AG04449 (cell line): ENCODE measurements at regions of chr12 and their contacts with region 1.

Region 1: DNA sequence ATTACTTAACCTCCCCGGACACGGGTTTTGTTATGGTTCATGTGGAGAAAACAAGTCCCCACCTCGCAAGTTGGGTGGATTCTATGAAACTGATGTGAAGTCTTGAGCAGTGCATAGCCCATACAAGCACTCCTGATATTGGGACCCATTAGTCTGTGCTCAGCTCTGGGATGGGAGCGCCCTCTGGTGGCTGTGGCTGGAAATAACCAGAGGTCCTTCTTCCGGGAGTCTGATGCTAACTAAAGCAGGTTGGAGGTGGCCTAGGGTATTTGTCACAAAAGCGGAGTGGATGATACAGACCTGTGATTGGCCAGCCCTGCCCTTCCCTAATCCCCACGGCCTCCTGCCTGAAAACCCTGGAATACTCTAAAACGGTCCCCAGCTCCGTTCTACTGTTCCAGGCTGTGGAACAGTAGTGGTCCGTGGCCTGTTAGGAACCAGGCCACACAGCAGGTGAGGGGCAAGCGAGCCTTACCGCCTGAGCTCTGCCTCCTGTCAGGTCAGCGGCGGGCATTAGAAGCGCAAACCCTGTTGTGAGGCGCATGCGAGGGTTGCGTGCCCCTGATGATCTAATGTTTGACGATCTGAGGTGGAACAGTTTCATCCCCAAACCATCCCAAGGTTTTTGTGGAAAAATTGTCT is 6.4 kb downstream of the SLC48A1 start:
- DNase-seq: peak; percentile 34
- H3K4me3 ChIP-seq: no peak overlapping the region
- CTCF ChIP-seq: peak; percentile 86

Region 2: DNA sequence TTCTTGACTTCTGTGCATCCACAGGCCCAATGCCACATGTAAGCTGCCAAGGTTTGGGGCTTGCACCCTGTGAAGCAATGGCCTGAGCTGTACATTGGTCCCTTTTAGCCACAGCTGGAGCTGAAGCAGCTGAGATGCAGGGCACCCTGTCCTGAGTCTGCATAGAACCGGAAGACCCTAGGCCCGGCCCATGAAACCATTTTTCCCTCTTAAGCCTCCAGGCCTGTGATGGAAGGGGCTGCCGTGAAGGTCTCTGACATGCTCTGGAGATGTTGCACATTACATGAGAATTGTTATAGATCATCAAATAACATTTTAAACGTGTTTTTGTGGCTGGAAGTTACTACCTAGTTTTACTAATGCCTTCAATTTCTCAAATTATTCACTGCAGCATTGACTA is 262.3 kb before region 1 on chr12:
- CTCF ChIA-PET with region 1: no interaction called
- POLR2A ChIA-PET with region 1: no interaction called
- DNase-seq: no peak
- H3K4me3 ChIP-seq: no peak overlapping the region
- CTCF ChIP-seq: no peak

Region 3: DNA sequence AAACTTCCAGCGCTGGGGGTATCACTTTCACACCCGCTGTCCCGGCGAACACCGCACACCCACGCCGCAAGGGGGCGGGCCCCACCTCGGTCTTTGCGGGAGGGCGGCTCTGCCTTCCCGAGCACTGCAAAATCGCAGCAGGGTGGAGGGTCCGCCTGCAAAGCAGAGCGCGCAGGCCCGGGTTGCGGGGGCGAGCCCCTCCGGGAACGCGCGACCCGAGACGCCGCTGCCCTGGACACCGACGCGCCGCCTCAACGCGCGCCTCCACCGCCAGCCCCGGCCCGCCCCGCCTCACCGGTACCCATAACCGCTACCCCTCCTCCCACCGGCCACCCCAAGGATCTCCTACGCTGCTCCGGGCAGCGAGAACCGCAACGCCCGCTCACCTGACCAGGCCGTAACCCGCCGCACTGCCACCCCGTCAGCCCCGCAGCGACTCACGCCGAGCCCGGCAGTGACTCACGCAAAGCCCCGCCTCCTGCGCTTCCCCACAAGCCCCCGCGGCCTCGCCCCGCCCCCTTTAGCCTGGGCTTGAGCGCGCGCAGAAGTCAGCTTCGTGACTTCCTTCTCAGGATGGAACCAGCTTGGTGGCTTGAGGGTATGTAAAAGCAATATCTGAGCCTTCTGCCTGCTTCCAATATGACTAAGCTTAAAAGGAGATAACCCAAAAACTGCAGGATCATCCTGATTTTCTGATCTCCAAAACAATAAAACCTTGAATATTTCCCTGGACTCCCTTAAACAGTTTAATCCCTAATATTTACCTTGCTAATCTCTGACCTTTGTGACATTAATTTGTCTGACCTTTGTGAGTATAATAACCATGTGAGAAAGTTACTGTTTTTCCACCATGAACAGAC is 73.6 kb before region 1 on chr12 and contains the start of gene RPAP3:
- CTCF ChIA-PET with region 1: interaction called, 1,419 read pairs
- POLR2A ChIA-PET with region 1: interaction called, 3 read pairs
- DNase-seq: no peak
- H3K4me3 ChIP-seq: peak within 1 kb of the TSS; percentile 86
- CTCF ChIP-seq: peak; percentile 81

Region 4: DNA sequence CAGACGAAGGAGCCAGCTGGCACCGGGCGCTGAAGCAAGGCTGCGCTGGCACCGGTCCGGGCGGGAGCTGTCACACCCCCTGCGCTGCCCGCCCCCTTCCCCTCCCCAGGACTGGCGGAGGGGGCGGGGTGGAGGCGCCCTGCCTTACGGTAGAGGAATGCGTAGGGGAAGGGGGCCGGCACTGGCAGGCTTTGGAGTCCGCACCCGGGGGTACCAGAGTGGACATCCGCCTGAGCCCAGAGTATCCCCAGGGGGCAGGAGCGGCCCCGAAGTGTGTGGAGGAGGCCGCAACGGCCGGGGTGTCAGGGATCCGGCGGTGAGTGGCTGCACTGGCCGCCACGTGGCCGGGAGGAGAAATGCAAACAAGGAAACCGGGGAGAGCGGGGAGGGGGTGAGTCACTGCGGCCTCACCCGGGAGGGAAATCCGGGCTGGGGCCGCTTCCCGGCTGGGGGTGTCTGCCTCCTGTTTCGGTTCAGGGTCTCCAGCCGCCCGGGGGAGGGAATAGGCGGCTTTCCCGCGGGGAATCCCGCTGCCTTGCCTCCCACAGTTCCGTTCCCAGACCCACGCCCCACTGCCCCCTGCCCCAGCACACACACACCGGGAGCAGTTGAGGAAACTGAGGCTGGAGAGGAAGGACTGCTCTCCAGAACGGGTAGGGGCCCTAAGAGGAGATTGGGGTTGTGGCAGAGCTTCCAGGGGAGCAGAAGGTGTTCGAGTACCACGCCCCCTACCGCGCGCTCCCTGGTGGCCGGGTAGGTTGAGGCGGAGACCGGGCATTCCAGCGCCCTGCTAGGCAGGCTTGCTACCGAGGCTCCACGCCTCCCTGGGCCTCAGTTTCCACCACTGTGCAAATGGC is 20.4 kb before region 1 on chr12 and contains the start of gene RAPGEF3:
- CTCF ChIA-PET with region 1: interaction called, 329 read pairs
- POLR2A ChIA-PET with region 1: interaction called, 4 read pairs
- DNase-seq: no peak
- H3K4me3 ChIP-seq: peak within 1 kb of the TSS; percentile 68
- CTCF ChIP-seq: peak; percentile 71

Region 5: DNA sequence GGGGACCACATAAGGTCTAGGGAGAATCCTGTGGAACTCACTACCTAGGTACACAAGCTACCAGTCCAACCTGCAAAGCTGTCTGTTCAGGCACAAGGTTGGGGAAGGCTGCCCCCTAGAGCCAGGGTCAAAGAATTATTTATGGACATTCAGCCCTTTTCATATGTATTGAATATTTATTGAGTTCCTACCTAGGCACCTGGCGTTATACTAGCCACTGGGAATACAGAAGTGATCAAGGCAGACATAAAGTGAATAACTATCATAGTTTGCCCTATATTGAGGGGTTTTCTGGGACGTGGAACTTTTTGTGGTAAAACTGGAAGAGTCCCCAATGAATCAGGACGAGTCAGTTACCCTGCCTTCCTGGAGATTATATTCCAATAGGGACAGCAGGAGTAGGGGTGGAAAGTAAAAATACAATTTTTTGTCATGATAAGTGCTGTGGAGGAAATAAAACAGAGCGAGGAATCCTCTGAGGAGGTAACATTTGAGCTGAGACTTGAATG is 12.2 kb before region 1 on chr12:
- CTCF ChIA-PET with region 1: interaction called, 329 read pairs
- POLR2A ChIA-PET with region 1: no interaction called
- DNase-seq: no peak
- H3K4me3 ChIP-seq: no peak overlapping the region
- CTCF ChIP-seq: peak; percentile 29

Region 6: GRCh38 chr12:47812797-47813510 is 33.5 kb after region 1 on chr12:
- CTCF ChIA-PET with region 1: interaction called, 300 read pairs
- POLR2A ChIA-PET with region 1: interaction called, 4 read pairs
- DNase-seq: peak; percentile 53
- H3K4me3 ChIP-seq: peak overlapping the region; percentile 48
- CTCF ChIP-seq: no peak

Region 7: GRCh38 chr12:47819896-47820630 is 40.6 kb after region 1 on chr12 and contains the start of gene HDAC7:
- CTCF ChIA-PET with region 1: interaction called, 751 read pairs
- POLR2A ChIA-PET with region 1: no interaction called
- DNase-seq: no peak
- H3K4me3 ChIP-seq: peak within 1 kb of the TSS; percentile 84
- CTCF ChIP-seq: no peak

Region 8: GRCh38 chr12:48078901-48079300 is 299.5 kb after region 1 on chr12:
- CTCF ChIA-PET with region 1: no interaction called
- POLR2A ChIA-PET with region 1: no interaction called
- DNase-seq: no peak
- H3K4me3 ChIP-seq: no peak overlapping the region
- CTCF ChIP-seq: no peak